CD8-positive, alpha-beta memory T cell (primary cell): ENCODE measurements at regions of chr1 and their contacts with region 1.

Region 1: DNA sequence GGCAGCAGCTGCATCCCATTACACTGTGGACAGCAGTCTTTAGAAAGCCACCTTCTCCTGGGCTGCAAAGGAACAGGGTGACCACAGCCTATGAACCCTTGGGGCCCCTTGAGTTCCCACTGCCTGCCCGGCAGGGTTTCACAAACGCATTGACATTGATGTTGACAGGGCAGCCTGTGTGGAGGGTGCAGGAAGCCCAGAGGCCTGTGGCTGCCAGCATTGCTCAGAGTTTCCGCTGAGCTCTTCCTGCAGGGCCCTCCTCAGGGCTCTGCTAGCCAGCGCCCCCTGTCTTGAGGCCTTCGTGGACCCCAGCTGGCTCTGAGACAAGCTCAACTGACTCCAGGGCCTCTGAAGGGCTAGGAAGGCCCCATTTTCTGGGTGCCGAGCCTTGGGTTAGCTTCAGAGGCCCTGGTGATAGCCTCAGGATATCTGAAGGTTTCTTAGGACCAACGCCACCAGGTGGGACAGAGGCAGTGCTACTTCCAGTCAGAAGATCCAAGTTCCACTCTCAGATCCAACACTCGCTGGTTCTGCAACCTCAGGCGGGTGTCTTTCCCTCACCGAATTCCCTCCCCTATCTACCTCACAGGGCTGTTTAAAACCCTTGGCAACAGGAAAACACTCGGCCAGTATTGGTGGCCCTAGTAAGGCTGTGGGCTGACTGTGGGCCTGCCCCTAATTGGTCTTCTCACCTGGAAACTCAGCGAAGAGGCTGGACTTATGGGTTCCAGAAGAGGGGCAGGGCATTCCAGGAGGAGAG is 27.2 kb upstream of the EPS8L3 start:
- DNase-seq: peak; percentile 59 to 91 (median 67)
- H3K4me3 ChIP-seq: peak overlapping the region; percentile 16
- H3K4me3 Mint-ChIP-seq: peak overlapping the region in 6 of 7 donors; percentile 26 to 75 (median 52)
- H3K27ac ChIP-seq: peak overlapping the region; percentile 44
- H3K27ac Mint-ChIP-seq: peak overlapping the region; percentile 77 to 91 (median 86)
- H3K4me1 ChIP-seq: peaks cover 63% of the 10 kb centered on the region
- H3K4me1 Mint-ChIP-seq: peaks cover 46 to 76% (median 51%) of the 10 kb centered on the region in 3 donors
- H3K27me3 ChIP-seq: no peaks in the 10 kb centered on the region
- H3K27me3 Mint-ChIP-seq: no peaks in the 10 kb centered on the region

Region 2: DNA sequence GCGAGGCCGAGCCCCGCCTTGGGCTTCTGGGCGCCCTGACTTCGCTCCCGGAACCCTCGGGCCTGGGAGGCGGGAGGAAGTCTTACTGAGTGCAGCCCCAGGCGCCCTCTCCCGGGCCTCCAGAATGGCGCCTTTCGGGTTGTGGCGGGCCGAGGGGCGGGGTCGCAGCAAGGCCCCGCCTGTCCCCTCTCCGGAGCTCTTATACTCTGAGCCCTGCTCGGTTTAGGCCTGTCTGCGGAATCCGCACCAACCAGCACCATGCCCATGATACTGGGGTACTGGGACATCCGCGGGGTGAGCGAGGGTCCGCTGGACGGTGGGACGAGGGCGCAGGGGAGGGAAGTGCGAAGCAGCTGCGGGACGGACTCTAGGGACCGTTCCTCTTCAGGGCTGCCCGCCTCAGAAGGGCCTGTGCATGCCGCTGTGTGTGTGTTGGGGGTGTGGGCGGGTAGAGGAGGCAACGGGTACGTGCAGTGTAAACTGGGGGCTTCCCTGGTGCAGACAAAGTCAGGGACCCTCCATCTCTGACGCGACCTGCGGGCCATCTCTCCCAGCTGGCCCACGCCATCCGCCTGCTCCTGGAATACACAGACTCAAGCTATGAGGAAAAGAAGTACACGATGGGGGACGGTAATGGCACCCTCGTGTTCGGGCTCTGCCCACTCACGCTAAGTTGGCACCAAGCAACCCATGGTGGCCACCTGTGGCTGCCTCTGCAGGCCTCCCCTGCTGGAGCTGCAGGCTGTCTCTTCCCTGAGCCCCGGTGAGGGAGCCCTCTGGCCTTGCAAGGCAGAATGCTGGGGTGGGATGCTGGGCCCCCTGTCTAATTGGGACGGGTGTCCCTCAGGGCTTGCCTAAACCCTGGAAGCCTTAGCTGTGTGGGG is 103.1 kb before region 1 on chr1 and contains the start of gene GSTM1:
- CTCF ChIA-PET with region 1: no interaction called
- POLR2A ChIA-PET with region 1: no interaction called
- DNase-seq: no peak
- H3K4me3 ChIP-seq: peak within 1 kb of the TSS; percentile 37
- H3K4me3 Mint-ChIP-seq: peak within 1 kb of the TSS in 4 of 7 donors; percentile 85 to 94 (median 89)
- H3K27ac ChIP-seq: no peak within 1 kb of the TSS
- H3K27ac Mint-ChIP-seq: peak within 1 kb of the TSS in 5 of 8 donors; percentile 42 to 95 (median 85)
- H3K4me1 ChIP-seq: no peaks in the 10 kb centered on the region
- H3K4me1 Mint-ChIP-seq: peaks cover 0 to 12% (median 0%) of the 10 kb centered on the region in 3 donors
- H3K27me3 ChIP-seq: no peaks in the 10 kb centered on the region
- H3K27me3 Mint-ChIP-seq: peaks cover 0 to 2% of the 10 kb centered on the region in 2 donors
- total RNA-seq, gene GSTM1: not detected

Region 3: GRCh38 chr1:109773146-109773899 is 17.6 kb before region 1 on chr1:
- CTCF ChIA-PET with region 1: interaction called, 39 read pairs
- POLR2A ChIA-PET with region 1: no interaction called
- DNase-seq: peak; percentile 27 to 81 (median 61)
- H3K4me3 ChIP-seq: no peak overlapping the region
- H3K4me3 Mint-ChIP-seq: no peak overlapping the region
- H3K27ac ChIP-seq: no peak overlapping the region
- H3K27ac Mint-ChIP-seq: peak overlapping the region in 2 of 8 donors; percentile 6 to 33
- H3K4me1 ChIP-seq: peaks cover 4% of the 10 kb centered on the region
- H3K4me1 Mint-ChIP-seq: peaks cover 5 to 15% (median 5%) of the 10 kb centered on the region in 3 donors
- H3K27me3 ChIP-seq: no peaks in the 10 kb centered on the region
- H3K27me3 Mint-ChIP-seq: peaks cover 10 to 19% of the 10 kb centered on the region in 2 donors

Region 4: GRCh38 chr1:109802901-109803561 is 12.1 kb after region 1 on chr1:
- CTCF ChIA-PET with region 1: interaction called, 34 read pairs
- POLR2A ChIA-PET with region 1: interaction called, 8 read pairs
- DNase-seq: no peak
- H3K4me3 ChIP-seq: peak overlapping the region; percentile 48
- H3K4me3 Mint-ChIP-seq: peak overlapping the region; percentile 6 to 85 (median 77)
- H3K27ac ChIP-seq: peak overlapping the region; percentile 45
- H3K27ac Mint-ChIP-seq: peak overlapping the region; percentile 49 to 97 (median 89)
- H3K4me1 ChIP-seq: peaks cover 76% of the 10 kb centered on the region
- H3K4me1 Mint-ChIP-seq: peaks cover 53 to 66% (median 63%) of the 10 kb centered on the region in 3 donors
- H3K27me3 ChIP-seq: no peaks in the 10 kb centered on the region
- H3K27me3 Mint-ChIP-seq: peaks cover 0 to 8% of the 10 kb centered on the region in 2 donors

Region 5: GRCh38 chr1:109807822-109808680 is 17.1 kb after region 1 on chr1:
- CTCF ChIA-PET with region 1: interaction called, 34 read pairs
- POLR2A ChIA-PET with region 1: no interaction called
- DNase-seq: no peak
- H3K4me3 ChIP-seq: no peak overlapping the region
- H3K4me3 Mint-ChIP-seq: no peak overlapping the region
- H3K27ac ChIP-seq: no peak overlapping the region
- H3K27ac Mint-ChIP-seq: peak overlapping the region in 2 of 8 donors; percentile 6 to 82
- H3K4me1 ChIP-seq: peaks cover 36% of the 10 kb centered on the region
- H3K4me1 Mint-ChIP-seq: peaks cover 20 to 30% (median 25%) of the 10 kb centered on the region in 3 donors
- H3K27me3 ChIP-seq: no peaks in the 10 kb centered on the region
- H3K27me3 Mint-ChIP-seq: peaks cover 3 to 9% of the 10 kb centered on the region in 2 donors